ENCODE measurements at regions of chr12 and their contacts with region 1.

Region 1: DNA sequence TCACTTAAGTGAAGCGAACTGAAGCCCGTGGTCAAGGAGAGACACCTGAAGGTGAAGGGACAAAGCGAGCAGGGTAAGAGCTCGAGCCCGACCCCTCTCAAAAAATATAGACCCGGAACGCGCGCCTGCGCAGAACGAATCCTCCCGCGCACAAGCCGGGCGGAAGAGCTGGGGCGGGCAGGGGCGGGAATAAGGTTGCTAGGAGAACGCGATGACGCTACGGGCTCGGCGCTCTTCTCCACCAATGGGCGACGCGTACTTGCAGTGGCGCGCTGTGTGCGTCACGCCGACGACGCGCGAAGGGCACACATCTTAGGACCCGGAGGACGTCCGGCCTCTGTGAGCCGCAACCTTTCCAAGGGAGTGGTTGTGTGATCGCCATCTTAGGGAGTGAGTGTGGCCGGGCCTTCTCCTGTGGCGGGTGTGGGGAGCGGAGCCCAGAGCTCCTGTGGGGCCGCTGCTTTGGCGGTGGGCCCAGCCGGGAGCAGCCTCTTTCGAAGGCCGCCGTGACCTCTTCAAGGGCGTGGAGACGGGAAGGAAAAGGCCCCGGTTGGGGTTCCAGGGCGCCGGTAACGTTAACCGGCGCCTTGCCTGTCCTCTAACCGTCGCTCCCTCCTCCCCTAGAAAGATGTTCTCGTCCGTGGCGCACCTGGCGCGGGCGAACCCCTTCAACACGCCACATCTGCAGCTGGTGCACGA is at the start of gene SLC25A3:
- DNase-seq: peak; percentile 91
- ATAC-seq: peak; percentile 98
- H3K4me3 Mint-ChIP-seq: peak within 1 kb of the TSS; percentile 94
- H3K27ac Mint-ChIP-seq: peak within 1 kb of the TSS; percentile 99
- H3K4me1 Mint-ChIP-seq: peaks cover 21% of the 10 kb centered on the region
- H3K27me3 Mint-ChIP-seq: no peaks in the 10 kb centered on the region
- total RNA-seq, gene SLC25A3: 326 to 337 TPM

Region 2: GRCh38 chr12:98550803-98551202 is 42.7 kb before region 1 on chr12:
- POLR2A ChIA-PET with region 1: no interaction called
- DNase-seq: no peak
- ATAC-seq: no peak
- H3K4me3 Mint-ChIP-seq: no peak overlapping the region
- H3K27ac Mint-ChIP-seq: no peak overlapping the region
- H3K4me1 Mint-ChIP-seq: peaks cover 2% of the 10 kb centered on the region
- H3K27me3 Mint-ChIP-seq: no peaks in the 10 kb centered on the region

Region 3: GRCh38 chr12:98606357-98606988 is 13.0 kb after region 1 on chr12:
- POLR2A ChIA-PET with region 1: interaction called, 40 read pairs
- DNase-seq: no peak
- ATAC-seq: no peak
- H3K4me3 Mint-ChIP-seq: no peak overlapping the region
- H3K27ac Mint-ChIP-seq: no peak overlapping the region
- H3K4me1 Mint-ChIP-seq: peaks cover 14% of the 10 kb centered on the region
- H3K27me3 Mint-ChIP-seq: no peaks in the 10 kb centered on the region

Region 4: GRCh38 chr12:98644711-98645402 is 51.4 kb after region 1 on chr12 and contains the starts of genes APAF1 and IKBIP:
- POLR2A ChIA-PET with region 1: interaction called, 38 read pairs
- DNase-seq: peak; percentile 99
- ATAC-seq: peak; percentile 85
- H3K4me3 Mint-ChIP-seq: peak within 1 kb of the TSS; percentile 97
- H3K27ac Mint-ChIP-seq: peak within 1 kb of the TSS; percentile 95
- H3K4me1 Mint-ChIP-seq: peaks cover 29% of the 10 kb centered on the region
- H3K27me3 Mint-ChIP-seq: no peaks in the 10 kb centered on the region
- total RNA-seq, gene APAF1: 32.0 to 32.8 TPM
- total RNA-seq, gene IKBIP: 23.4 to 24.0 TPM

Region 5: GRCh38 chr12:98671459-98671858 is 78.0 kb after region 1 on chr12:
- POLR2A ChIA-PET with region 1: no interaction called
- DNase-seq: no peak
- ATAC-seq: no peak
- H3K4me3 Mint-ChIP-seq: no peak overlapping the region
- H3K27ac Mint-ChIP-seq: no peak overlapping the region
- H3K4me1 Mint-ChIP-seq: peaks cover 4% of the 10 kb centered on the region
- H3K27me3 Mint-ChIP-seq: no peaks in the 10 kb centered on the region

Measured in activated naive CD8-positive, alpha-beta T cell treated with anti-CD3 and anti-CD28 coated beads, Interleukin-2, amount 10 ng/mL, durations not matched to agents 7 days and 5 days (primary cell).